ENCODE measurements at regions of chr4 and their contacts with region 1.

Region 1: GRCh38 chr4:25859429-25860148 is 3.2 kb downstream of the SEL1L3 start:
- DNase-seq: no peak
- H3K4me3 ChIP-seq: peak overlapping the region in 5 of 8 donors; percentile 6 to 88 (median 83)
- H3K27ac ChIP-seq: peak overlapping the region; percentile 75 to 95 (median 93)
- H3K4me1 ChIP-seq: peaks cover 58 to 90% (median 83%) of the 10 kb centered on the region in 6 donors
- H3K27me3 ChIP-seq: no peaks in the 10 kb centered on the region
- CTCF ChIP-seq: no peak
- POLR2A ChIP-seq: no peak

Region 2: GRCh38 chr4:25351777-25352416 is 507.7 kb before region 1 on chr4:
- intact Hi-C with region 1: no loop called
- DNase-seq: no peak
- H3K4me3 ChIP-seq: no peak overlapping the region
- H3K27ac ChIP-seq: no peak overlapping the region
- H3K4me1 ChIP-seq: no peaks in the 10 kb centered on the region
- H3K27me3 ChIP-seq: no peaks in the 10 kb centered on the region
- CTCF ChIP-seq: no peak
- POLR2A ChIP-seq: no peak

Region 3: DNA sequence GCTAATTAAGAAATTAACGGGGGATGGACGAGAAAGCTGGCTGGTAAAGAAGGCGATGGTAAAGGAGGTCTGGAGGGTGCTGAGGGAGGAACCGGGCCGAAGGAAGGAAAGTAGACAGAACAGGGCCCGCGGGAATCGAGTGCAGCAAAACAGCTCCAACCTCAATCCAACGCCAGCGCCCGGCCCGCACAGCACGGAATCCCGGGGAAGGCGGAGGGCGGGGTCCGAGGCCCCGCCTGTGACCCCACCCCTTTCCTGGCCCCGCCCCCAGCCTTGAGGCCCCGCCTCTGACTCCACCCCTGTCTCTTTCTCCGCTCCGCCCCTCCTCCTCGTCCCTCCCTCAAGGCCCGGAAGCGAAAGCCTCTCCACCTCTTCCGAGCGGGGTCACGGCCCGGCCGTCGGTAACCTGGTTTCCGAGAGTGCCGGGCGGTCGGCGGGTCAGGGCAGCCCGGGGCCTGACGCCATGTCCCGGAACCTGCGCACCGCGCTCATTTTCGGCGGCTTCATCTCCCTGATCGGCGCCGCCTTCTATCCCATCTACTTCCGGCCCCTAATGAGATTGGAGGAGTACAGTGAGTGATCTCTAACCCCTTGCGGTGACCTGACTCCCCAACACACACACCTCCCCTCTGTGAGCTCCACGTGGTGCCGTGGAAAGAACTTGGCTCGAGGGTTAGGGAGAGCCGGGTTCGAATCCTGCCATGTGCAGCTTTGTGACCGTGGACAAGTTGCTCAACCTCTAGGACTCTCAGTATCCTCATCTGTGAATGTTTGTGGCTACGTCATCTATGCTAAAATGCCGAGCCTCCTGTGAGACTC is 54.5 kb after region 1 on chr4 and contains the start of gene SMIM20:
- intact Hi-C with region 1: loop called (anchors 5 kb)
- DNase-seq: peak; percentile 98
- H3K4me3 ChIP-seq: peak within 1 kb of the TSS; percentile 50 to 89 (median 58)
- H3K27ac ChIP-seq: peak within 1 kb of the TSS; percentile 82 to 97 (median 92)
- H3K4me1 ChIP-seq: peaks cover 8 to 36% (median 25%) of the 10 kb centered on the region in 6 donors
- H3K27me3 ChIP-seq: no peaks in the 10 kb centered on the region
- CTCF ChIP-seq: peak in 4 of 11 experiments; percentile 9 to 34 (median 17)
- POLR2A ChIP-seq: peak in 1 of 3 donors; percentile 55
- total RNA-seq, gene SMIM20: 15.7 to 25.9 (median 20.2) TPM

Region 4: DNA sequence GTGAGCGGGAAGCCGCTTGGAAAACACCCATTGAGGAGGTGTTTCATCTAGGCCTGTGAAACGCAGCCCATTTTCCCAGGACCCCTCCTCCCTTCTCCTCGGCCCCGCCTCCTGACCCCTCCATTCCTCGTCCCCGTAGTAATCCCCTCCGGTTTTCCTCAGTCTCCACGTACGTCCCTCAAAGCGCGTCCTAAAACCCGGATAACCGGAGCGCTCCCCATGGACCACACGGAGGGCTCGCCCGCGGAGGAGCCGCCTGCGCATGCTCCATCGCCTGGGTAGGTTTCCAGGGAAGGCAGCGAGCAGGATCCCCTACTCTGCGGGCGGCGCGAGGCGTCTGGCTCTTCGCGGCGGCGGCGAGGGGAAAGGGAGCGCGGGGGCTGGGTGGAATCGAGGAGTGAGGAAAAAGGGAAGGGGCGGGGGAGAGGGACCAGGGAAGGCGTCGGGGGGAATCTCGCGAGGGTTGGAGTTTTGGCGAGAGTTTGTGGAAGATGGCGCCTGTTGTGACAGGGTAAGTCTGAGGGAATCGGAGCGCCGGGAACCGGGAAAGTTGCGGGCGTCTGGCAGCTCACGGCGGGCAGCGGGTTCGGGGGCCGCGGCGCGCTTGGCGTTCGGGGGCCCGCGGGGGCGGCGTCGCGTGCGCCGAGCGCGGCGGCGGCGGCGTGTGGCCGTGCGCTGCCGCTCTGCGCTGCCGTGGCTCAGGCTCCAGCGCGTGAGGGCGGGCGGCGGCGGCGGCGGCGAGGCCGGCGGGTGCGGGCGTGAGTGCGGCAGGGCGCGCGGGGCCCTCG is 461.1 kb after region 1 on chr4 and contains the start of gene RBPJ:
- intact Hi-C with region 1: loop called (anchors 10 kb)
- DNase-seq: peak; percentile 95
- H3K4me3 ChIP-seq: peak within 1 kb of the TSS; percentile 65 to 90 (median 88)
- H3K27ac ChIP-seq: peak within 1 kb of the TSS; percentile 82 to 96 (median 94)
- H3K4me1 ChIP-seq: peaks cover 8 to 64% (median 43%) of the 10 kb centered on the region in 6 donors
- H3K27me3 ChIP-seq: no peaks in the 10 kb centered on the region
- CTCF ChIP-seq: peak in 1 of 11 experiments; percentile 7
- POLR2A ChIP-seq: peak in 2 of 3 donors; percentile 17 to 44
- total RNA-seq, gene RBPJ: 68.2 to 91.9 (median 81.6) TPM